ENCODE measurements at regions of chr14 and their contacts with region 1.

Region 1: DNA sequence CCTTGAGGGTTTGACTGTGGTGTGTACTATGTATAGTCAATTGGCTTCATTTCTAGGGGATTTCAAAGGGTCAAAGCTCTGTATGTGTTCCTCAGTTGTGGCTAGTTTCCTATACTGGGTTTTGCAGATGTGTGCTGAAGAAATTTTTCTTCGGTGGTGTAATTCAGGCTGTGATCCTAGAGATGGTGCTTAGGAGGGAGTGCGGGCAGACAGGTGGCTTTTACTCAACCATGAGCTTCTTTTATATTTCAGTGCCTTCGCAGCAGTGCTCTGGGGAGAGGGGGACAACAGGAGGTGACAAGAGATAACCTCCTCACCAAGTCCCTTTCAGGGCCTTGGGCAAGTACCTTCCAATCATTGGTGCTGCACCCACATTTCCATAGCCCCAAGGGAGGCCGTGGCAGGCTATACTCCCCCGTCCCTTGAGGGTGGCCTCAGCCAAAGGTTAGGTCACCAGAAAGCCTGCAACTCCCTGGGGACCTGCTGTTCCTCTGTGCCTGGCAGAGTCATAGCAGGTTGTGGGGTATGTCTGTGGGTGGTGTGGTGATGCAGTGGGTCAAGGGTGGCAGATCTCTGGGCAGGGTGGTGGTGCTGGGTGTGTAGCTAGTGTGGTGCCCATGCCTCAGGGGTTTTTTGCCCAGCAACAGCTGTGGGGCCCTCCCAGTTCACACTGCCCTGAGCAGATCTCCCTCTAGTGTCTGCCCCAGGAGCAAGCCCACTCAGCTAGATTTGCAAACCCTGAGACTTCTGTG is 37.0 kb upstream of the TMX1 start:
- DNase-seq: no peak
- H3K4me3 ChIP-seq: no peak overlapping the region
- CTCF ChIP-seq: no peak
- POLR2A ChIP-seq: no peak

Region 2: GRCh38 chr14:50835280-50835679 is 367.8 kb before region 1 on chr14:
- intact Hi-C with region 1: loop called (anchors 5 kb)
- DNase-seq: no peak
- H3K4me3 ChIP-seq: no peak overlapping the region
- CTCF ChIP-seq: no peak
- POLR2A ChIP-seq: no peak

Region 3: GRCh38 chr14:51398898-51399297 is 195.8 kb after region 1 on chr14:
- intact Hi-C with region 1: no loop called
- DNase-seq: peak in 1 of 2 donors; percentile 50
- H3K4me3 ChIP-seq: no peak overlapping the region
- CTCF ChIP-seq: no peak
- POLR2A ChIP-seq: no peak

Measured in lower leg skin (tissue), 4 donors.